ENCODE measurements at regions of chr7 and their contacts with region 1.

Region 1: DNA sequence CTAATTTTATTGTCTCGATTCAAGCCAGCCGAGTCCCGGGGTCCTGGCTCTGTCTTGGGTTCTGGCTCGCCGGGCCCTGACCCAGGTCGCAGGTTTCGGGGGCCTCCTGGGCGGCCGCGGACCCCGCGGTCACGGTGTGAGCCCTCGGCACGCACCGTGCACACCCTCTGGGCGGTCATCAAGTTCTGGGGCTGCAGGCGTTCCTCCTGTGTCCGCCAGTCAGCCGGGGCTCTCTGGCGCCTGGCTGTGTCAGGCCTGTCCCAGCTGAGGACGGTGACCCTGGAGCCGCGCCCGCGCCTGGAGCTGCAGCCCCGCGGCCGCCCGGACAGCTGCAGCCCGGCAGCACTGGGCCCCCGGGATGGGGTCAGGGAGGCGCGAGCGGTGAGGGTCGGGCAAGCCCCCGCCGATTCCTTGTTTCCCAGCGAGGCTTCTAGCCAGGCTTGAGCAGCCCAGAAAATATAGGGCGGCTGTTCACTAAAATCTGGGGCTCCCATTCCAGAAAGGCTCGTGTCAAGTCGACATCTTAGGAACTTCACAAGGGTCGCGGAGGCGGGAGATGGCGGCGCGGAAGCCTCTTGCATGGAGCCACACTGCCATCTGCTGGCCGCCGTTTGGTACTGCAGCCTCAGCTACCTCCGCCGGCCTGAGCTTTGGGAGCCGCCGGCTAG is 4.2 kb upstream of the HOXA7 start:
- DNase-seq: peak; percentile 65
- H3K4me3 Mint-ChIP-seq: peak overlapping the region; percentile 47
- H3K27ac Mint-ChIP-seq: no peak overlapping the region
- H3K4me1 Mint-ChIP-seq: peaks cover 5% of the 10 kb centered on the region
- H3K27me3 Mint-ChIP-seq: peaks cover 81% of the 10 kb centered on the region

Region 2: DNA sequence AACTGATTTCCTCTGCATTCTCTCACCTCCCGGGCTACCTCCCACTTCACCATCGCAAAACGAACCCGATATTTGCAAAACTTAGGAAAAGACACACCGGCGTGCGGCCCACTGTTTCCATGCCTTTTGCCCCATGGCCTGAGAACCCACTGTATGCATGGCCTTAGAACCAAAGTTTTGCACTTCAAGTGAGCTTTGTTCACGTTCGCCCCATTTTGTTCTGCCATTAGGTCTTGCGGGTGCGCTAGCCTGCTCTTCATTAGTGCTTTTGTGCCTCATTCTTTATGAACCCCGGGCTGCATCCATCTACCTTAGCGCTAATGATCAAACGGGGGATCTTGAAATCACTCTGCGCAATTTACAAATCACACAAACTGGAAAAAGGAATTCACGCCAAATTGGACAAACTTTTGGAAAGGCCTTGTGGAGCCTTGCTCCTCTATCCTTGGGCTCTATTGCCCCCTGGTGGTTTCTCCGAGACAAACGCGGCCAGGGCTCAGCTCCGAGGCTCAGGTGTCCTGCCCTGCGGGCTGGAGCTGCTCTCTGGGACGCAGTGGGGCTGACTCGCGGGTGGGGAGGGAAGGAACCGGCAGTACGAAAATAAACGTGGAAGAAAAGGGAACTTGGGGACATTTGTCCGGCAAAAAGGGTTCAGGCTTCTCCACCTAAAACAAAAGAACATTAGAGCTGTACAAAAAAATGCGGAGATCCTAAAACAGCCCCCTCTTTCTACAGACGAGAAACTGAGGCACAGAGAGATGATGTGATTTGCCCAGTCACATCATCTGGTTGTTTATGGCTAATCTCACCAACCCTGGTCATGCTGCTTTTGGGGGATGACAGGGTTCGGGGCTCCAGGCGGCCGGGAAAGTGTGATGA is 1309.1 kb before region 1 on chr7:
- intact Hi-C with region 1: loop called (anchors 5 kb)
- DNase-seq: peak; percentile 63
- H3K4me3 Mint-ChIP-seq: peak overlapping the region; percentile 78
- H3K27ac Mint-ChIP-seq: peak overlapping the region; percentile 74
- H3K4me1 Mint-ChIP-seq: peaks cover 21% of the 10 kb centered on the region
- H3K27me3 Mint-ChIP-seq: peaks cover 43% of the 10 kb centered on the region

Region 3: GRCh38 chr7:26365077-26365900 is 795.4 kb before region 1 on chr7:
- intact Hi-C with region 1: loop called (anchors 1 kb)
- DNase-seq: peak; percentile 30
- H3K4me3 Mint-ChIP-seq: no peak overlapping the region
- H3K27ac Mint-ChIP-seq: peak overlapping the region; percentile 63
- H3K4me1 Mint-ChIP-seq: peaks cover 20% of the 10 kb centered on the region
- H3K27me3 Mint-ChIP-seq: no peaks in the 10 kb centered on the region

Region 4: GRCh38 chr7:26686448-26686981 is 474.2 kb before region 1 on chr7:
- intact Hi-C with region 1: loop called (anchors 1 kb)
- DNase-seq: no peak
- H3K4me3 Mint-ChIP-seq: no peak overlapping the region
- H3K27ac Mint-ChIP-seq: no peak overlapping the region
- H3K4me1 Mint-ChIP-seq: peaks cover 5% of the 10 kb centered on the region
- H3K27me3 Mint-ChIP-seq: peaks cover 36% of the 10 kb centered on the region

Region 5: GRCh38 chr7:26853788-26854393 is 306.8 kb before region 1 on chr7:
- intact Hi-C with region 1: loop called (anchors 5 kb)
- DNase-seq: no peak
- H3K4me3 Mint-ChIP-seq: no peak overlapping the region
- H3K27ac Mint-ChIP-seq: no peak overlapping the region
- H3K4me1 Mint-ChIP-seq: peaks cover 4% of the 10 kb centered on the region
- H3K27me3 Mint-ChIP-seq: peaks cover 37% of the 10 kb centered on the region

Region 6: GRCh38 chr7:27095897-27096767 is 64.5 kb before region 1 on chr7 and contains the start of gene HOXA1:
- intact Hi-C with region 1: no loop called
- DNase-seq: peak; percentile 66
- H3K4me3 Mint-ChIP-seq: peak within 1 kb of the TSS; percentile 80
- H3K27ac Mint-ChIP-seq: peak within 1 kb of the TSS; percentile 21
- H3K4me1 Mint-ChIP-seq: peaks cover 16% of the 10 kb centered on the region
- H3K27me3 Mint-ChIP-seq: peaks cover 83% of the 10 kb centered on the region
- total RNA-seq, gene HOXA1: 0.11 and 0.16 TPM in 2 replicates

Region 7: DNA sequence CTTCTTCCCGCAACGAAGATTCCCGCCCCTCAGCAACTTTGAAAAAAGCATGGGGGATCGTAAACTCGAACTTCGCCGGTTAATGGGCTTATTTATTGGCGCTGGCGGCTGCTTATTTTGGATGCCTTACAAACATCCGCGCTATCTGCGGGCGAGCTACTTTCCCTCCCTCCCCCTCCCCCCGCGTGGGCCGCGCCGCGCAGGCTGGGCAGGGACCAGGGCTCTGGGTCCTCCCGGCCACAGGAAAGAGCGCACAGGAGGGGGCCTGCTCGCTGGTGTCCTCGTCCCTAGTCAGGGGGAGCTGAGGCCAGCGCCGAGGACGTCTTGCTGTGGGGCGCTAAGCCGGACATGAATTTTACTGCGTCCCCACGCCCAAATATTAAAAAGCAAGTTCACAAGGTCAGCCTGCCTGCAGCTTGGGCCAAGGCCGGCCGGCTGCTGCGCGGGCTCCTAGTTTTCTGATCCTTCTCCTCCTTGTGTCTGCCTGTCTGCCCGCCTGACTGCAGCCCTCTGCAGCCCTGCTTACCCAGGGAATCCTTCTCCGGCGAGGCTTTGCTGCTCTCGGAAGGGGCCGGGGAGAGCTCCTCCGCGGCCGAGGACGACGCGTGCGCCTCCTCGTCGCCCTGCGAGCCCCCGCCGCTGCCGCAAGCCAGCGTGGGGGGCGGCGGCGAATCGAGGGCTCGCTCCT is 12.3 kb after region 1 on chr7:
- intact Hi-C with region 1: loop called (anchors 2 kb)
- DNase-seq: no peak
- H3K4me3 Mint-ChIP-seq: no peak overlapping the region
- H3K27ac Mint-ChIP-seq: no peak overlapping the region
- H3K4me1 Mint-ChIP-seq: peaks cover 2% of the 10 kb centered on the region
- H3K27me3 Mint-ChIP-seq: peaks cover 64% of the 10 kb centered on the region

Region 8: GRCh38 chr7:27184337-27185012 is 23.8 kb after region 1 on chr7:
- intact Hi-C with region 1: loop called (anchors 2 kb)
- DNase-seq: no peak
- H3K4me3 Mint-ChIP-seq: no peak overlapping the region
- H3K27ac Mint-ChIP-seq: peak overlapping the region; percentile 55
- H3K4me1 Mint-ChIP-seq: peaks cover 14% of the 10 kb centered on the region
- H3K27me3 Mint-ChIP-seq: peaks cover 73% of the 10 kb centered on the region

Measured in activated T-helper 2 cell treated with anti-CD3 and anti-CD28 coated beads, Interferon-gamma antibody, Interleukin-2, Interleukin-4, amounts not matched to agents 10 μg/mL and 5 μg/mL and 100 μg/mL, durations not matched to agents 14 hours and 24 hours and 36 hours (primary cell).